Posterior cingulate gyrus (tissue), 11 donors: ENCODE measurements at regions of chr4 and their contacts with region 1.

Region 1: DNA sequence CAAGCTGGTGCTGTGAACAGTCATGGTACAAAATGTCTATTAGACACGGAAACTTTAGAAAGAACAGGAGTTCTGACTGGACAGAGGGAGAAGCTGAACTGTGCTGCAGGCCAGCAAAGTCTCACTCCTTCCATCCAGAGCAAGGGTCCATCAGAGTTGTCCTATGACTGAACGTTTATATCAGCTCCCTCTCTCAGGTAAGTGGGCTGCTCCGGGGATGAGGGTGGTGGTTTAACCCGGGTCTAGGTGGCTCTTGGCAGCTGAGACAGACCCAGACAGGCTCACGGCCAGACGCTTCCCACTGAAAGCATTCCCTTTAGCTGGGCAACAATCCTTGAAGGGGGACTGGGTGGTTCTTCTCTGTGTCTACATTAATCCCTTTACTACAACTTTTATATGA is 385.0 kb upstream of the SMIM31 start:
- DNase-seq: peak in 2 of 10 donors; percentile 44 to 57

Region 2: GRCh38 chr4:163726641-163727040 is 642.3 kb before region 1 on chr4:
- intact Hi-C with region 1: no loop called
- DNase-seq: no peak

Region 3: GRCh38 chr4:164318350-164318749 is 50.5 kb before region 1 on chr4:
- intact Hi-C with region 1: loop called (anchors 10 kb)
- DNase-seq: no peak